Ascending aorta (tissue), 2 donors: ENCODE measurements at regions of chr12 and their contacts with region 1.

Region 1: DNA sequence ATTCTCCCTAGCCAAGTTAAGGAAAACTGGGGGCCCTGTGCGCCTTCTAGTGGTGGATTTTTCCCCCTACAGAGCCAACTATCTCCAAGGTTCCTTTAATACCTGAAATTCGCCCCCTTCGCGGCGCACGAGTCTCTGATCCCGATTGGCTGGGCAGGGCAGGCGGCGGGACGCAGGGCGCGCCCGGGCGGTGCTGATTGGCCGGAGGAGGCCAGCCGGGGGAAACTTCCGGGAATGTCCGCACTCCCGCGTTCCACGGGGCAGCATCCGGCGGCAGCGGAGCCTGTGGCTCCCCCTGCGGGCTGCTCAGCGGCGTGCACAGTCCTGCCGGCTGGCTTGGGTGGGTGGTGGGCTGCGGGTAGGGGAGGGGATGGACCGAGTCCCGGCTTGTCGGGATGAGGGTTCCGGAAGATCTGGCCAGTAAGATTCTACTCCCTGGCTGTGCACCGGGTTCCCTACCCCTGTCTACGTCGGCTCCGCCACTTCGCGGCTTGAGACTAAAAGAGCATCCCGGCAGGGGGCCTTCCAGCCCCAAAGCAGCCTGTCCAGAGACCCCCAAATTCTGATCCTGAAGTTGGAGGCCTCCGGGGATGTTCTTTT is at the start of gene NABP2:
- DNase-seq: peak; percentile 93 to 99
- H3K4me3 ChIP-seq: peak within 1 kb of the TSS; percentile 69 to 78
- H3K27ac ChIP-seq: peak within 1 kb of the TSS; percentile 98 to 100
- H3K4me1 ChIP-seq: peaks cover 16 to 36% of the 10 kb centered on the region in 2 donors
- H3K27me3 ChIP-seq: no peaks in the 10 kb centered on the region
- CTCF ChIP-seq: peak; percentile 82 to 96 (median 87)
- total RNA-seq, gene NABP2: 2.8 TPM

Region 2: GRCh38 chr12:55955800-55956508 is 268.2 kb before region 1 on chr12:
- intact Hi-C with region 1: no loop called
- DNase-seq: no peak
- H3K4me3 ChIP-seq: no peak overlapping the region
- H3K27ac ChIP-seq: no peak overlapping the region
- H3K4me1 ChIP-seq: no peaks in the 10 kb centered on the region
- H3K27me3 ChIP-seq: no peaks in the 10 kb centered on the region
- CTCF ChIP-seq: no peak

Region 3: DNA sequence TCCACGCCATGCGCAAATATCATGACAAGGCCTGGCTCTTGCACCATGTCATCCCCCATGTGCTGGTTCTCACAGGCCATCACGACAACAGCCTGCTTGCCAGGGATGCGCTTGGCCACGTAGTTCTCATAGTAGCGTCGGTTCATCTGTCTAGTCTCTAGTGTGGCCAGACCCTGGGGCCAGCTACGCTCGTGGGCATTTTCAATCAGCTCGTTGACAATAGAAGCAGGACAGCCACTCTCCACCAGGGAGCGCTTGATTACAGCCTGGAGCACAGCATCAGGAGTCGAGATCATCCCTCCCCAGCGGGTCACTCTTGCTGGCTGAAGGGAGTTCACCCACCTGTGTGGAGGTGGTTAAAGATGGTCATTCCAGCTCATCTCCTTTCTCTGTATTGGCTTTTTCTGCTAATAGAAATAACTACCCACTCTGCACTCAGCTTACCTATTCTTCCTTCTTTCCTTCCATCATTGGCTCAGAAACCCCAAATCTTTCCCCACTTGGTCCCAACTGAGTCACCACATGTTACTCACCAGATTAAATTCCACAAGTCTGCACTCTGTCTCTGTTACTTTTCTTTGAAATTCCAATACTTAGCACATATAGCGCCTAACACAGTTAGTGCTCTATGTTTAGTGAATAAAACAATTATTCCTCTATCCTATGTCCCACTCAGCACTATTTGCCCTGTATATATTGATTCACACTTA is 17.6 kb before region 1 on chr12:
- intact Hi-C with region 1: loop called (anchors 2 kb)
- DNase-seq: peak in 1 of 2 donors; percentile 76
- H3K4me3 ChIP-seq: no peak overlapping the region
- H3K27ac ChIP-seq: peak overlapping the region; percentile 4 to 38
- H3K4me1 ChIP-seq: peaks cover 0 to 2% of the 10 kb centered on the region in 2 donors
- H3K27me3 ChIP-seq: no peaks in the 10 kb centered on the region
- CTCF ChIP-seq: peak; percentile 45 to 57 (median 52)

Region 4: DNA sequence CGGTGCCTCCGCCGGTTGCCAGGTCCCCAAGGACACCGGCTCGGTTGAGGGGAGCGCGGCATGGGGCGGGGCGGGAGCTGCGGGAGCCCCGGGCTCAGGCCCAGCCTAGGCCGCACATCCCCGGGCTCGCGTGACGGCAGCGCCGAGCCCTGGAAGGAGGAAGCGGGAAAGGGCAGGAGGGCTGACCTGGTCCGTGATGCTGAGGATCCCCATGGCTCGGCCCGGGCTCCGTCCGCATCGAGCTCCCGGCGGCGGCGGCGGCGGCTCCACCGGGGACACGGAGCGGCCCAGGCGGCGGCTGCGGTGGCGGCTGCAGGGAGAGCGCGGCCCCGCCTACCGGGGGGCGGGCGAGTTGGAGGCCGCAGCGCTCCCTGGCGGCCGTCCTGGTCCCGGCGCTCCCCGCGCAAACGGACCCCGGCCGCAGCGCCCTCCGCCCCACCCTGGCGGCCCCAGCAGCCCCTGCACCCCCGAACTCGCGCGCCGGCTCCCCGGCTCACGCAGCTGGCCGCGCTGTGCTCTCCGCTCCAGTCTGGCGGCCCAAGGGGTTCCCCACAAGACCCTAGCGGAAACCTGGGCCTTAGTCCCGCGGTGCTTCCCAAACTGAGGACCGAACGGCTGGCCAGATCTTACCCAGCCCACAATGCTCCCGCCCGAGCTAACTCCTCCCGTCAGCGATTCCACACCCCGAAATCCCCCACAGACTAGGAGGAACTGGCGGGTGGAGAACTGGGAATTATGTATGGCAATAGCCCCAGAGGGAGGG is 34.0 kb after region 1 on chr12 and contains the start of gene ANKRD52:
- intact Hi-C with region 1: loop called (anchors 1 kb)
- DNase-seq: peak in 1 of 2 donors; percentile 82
- H3K4me3 ChIP-seq: peak within 1 kb of the TSS; percentile 69 to 89
- H3K27ac ChIP-seq: peak within 1 kb of the TSS; percentile 75 to 89
- H3K4me1 ChIP-seq: peaks cover 3 to 19% of the 10 kb centered on the region in 2 donors
- H3K27me3 ChIP-seq: no peaks in the 10 kb centered on the region
- CTCF ChIP-seq: peak; percentile 24 to 95 (median 33)
- total RNA-seq, gene ANKRD52: 17.5 TPM

Region 5: DNA sequence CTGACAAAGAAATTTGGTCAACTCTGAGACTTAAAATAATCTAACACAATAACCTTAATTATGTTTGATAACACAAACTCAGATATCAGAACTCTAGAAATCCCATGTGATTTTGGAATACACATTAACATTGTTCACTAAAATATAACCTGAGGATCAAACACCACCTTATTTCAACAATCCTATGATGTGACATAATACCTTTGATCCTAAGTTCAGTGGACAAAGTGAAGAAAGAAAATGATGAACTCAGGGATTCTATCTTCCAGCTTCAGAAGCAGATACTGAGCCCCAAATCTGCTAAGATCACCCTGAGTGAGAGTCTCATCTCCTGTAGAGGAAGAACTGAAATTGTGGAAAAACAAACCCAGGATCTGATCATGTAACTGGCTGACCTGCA is 174.1 kb after region 1 on chr12:
- intact Hi-C with region 1: no loop called
- DNase-seq: no peak
- H3K4me3 ChIP-seq: no peak overlapping the region
- H3K27ac ChIP-seq: no peak overlapping the region
- H3K4me1 ChIP-seq: no peaks in the 10 kb centered on the region
- H3K27me3 ChIP-seq: no peaks in the 10 kb centered on the region
- CTCF ChIP-seq: no peak